MCF 10A (cell line): ENCODE measurements at regions of chr3 and their contacts with region 1.

Region 1: DNA sequence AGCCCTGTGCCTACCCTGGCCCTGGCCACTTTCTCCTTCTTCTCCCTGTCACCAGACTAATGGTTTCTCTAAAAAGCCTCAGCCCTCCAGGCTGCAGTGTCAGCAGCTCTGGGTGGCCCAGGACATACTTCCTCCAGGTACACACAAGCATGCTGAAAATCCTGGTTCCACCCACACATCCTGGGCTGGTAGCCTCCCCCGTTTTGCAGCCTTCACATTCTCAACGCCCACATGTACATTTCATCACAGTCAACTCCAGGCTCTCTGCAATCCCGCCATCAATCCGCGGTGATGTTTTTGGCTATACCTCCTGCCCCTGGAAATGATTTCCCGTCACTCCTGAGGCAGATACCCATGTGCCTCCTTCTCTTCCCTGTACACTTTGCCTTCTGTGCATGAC is 59.4 kb downstream of the MAGEF1 start:
- DNase-seq: peak; percentile 92
- H3K4me3 Mint-ChIP-seq: peak overlapping the region; percentile 20
- H3K27ac Mint-ChIP-seq: peak overlapping the region; percentile 89
- H3K4me1 Mint-ChIP-seq: peaks cover 27% of the 10 kb centered on the region
- H3K27me3 Mint-ChIP-seq: no peaks in the 10 kb centered on the region
- CTCF ChIP-seq: no peak

Region 2: GRCh38 chr3:184636741-184637316 is 15.6 kb before region 1 on chr3:
- CTCF ChIA-PET with region 1: interaction called, 3 read pairs
- POLR2A ChIA-PET with region 1: interaction called, 11 read pairs
- intact Hi-C with region 1: no loop called
- DNase-seq: peak; percentile 81
- H3K4me3 Mint-ChIP-seq: no peak overlapping the region
- H3K27ac Mint-ChIP-seq: no peak overlapping the region
- H3K4me1 Mint-ChIP-seq: peaks cover 28% of the 10 kb centered on the region
- H3K27me3 Mint-ChIP-seq: no peaks in the 10 kb centered on the region
- CTCF ChIP-seq: no peak

Region 3: GRCh38 chr3:184740524-184741484 is 88.3 kb after region 1 on chr3:
- CTCF ChIA-PET with region 1: interaction called, 3 read pairs
- POLR2A ChIA-PET with region 1: interaction called, 16 read pairs
- intact Hi-C with region 1: no loop called
- DNase-seq: peak; percentile 96
- H3K4me3 Mint-ChIP-seq: peak overlapping the region; percentile 68
- H3K27ac Mint-ChIP-seq: peak overlapping the region; percentile 93
- H3K4me1 Mint-ChIP-seq: peaks cover 48% of the 10 kb centered on the region
- H3K27me3 Mint-ChIP-seq: no peaks in the 10 kb centered on the region
- CTCF ChIP-seq: no peak

Region 4: GRCh38 chr3:186487819-186488218 is 1835.3 kb after region 1 on chr3:
- CTCF ChIA-PET with region 1: no interaction called
- POLR2A ChIA-PET with region 1: no interaction called
- intact Hi-C with region 1: no loop called
- DNase-seq: peak; percentile 16
- H3K4me3 Mint-ChIP-seq: no peak overlapping the region
- H3K27ac Mint-ChIP-seq: no peak overlapping the region
- H3K4me1 Mint-ChIP-seq: no peaks in the 10 kb centered on the region
- H3K27me3 Mint-ChIP-seq: peaks cover 31% of the 10 kb centered on the region
- CTCF ChIP-seq: no peak